ENCODE measurements at regions of chr21 and their contacts with region 1.

Region 1: GRCh38 chr21:31580866-31581276 is 78.6 kb upstream of the SOD1 start:
- DNase-seq: no peak
- H3K4me3 ChIP-seq: no peak overlapping the region
- H3K27ac ChIP-seq: no peak overlapping the region
- H3K4me1 ChIP-seq: no peaks in the 10 kb centered on the region
- H3K27me3 ChIP-seq: peaks cover 0 to 13% (median 0%) of the 10 kb centered on the region in 4 donors
- CTCF ChIP-seq: peak; percentile 66 to 84 (median 67)
- EP300 ChIP-seq: no peak
- POLR2A ChIP-seq: no peak

Region 2: DNA sequence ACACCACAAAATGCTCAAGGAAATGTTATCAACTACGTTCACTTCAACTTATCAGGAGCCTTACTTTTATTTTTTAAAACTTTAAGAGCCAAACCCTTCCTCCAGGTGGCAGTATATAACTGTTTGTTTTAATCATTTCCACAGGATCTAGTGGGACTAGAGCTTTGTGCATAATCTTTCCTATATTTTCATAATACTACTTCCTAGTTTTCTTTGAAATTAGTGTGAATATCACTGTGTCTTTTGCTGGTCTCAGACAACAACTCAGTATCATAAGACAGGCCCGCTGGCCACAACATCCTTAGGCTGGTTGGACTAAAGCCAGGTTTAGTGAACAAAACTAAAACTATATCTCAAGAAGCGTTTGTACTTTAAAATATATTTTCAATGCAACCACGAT is 382.3 kb before region 1 on chr21:
- intact Hi-C with region 1: loop called (anchors 2 kb)
- DNase-seq: no peak
- H3K4me3 ChIP-seq: no peak overlapping the region
- H3K27ac ChIP-seq: no peak overlapping the region
- H3K4me1 ChIP-seq: peaks cover 0 to 4% (median 0%) of the 10 kb centered on the region in 4 donors
- H3K27me3 ChIP-seq: peaks cover 0 to 19% (median 0%) of the 10 kb centered on the region in 4 donors
- CTCF ChIP-seq: peak; percentile 46 to 61 (median 56)
- EP300 ChIP-seq: no peak
- POLR2A ChIP-seq: no peak

Measured in esophagus muscularis mucosa (tissue), 4 donors.